ENCODE measurements at regions of chr2 and their contacts with region 1.

Region 1: GRCh38 chr2:26846328-26847306 is 1.3 kb upstream of the DPYSL5 start:
- DNase-seq: peak; percentile 55 to 72
- ATAC-seq: peak; percentile 67 to 90 (median 80)
- H3K4me3 ChIP-seq: peak overlapping the region in 1 of 10 donors; percentile 18
- H3K27ac ChIP-seq: no peak overlapping the region
- H3K4me1 ChIP-seq: peaks cover 12 to 43% (median 38%) of the 10 kb centered on the region in 9 donors
- H3K27me3 ChIP-seq: peaks cover 42 to 99% (median 92%) of the 10 kb centered on the region in 7 donors
- CTCF ChIP-seq: peak; percentile 67 to 88 (median 80)

Region 2: DNA sequence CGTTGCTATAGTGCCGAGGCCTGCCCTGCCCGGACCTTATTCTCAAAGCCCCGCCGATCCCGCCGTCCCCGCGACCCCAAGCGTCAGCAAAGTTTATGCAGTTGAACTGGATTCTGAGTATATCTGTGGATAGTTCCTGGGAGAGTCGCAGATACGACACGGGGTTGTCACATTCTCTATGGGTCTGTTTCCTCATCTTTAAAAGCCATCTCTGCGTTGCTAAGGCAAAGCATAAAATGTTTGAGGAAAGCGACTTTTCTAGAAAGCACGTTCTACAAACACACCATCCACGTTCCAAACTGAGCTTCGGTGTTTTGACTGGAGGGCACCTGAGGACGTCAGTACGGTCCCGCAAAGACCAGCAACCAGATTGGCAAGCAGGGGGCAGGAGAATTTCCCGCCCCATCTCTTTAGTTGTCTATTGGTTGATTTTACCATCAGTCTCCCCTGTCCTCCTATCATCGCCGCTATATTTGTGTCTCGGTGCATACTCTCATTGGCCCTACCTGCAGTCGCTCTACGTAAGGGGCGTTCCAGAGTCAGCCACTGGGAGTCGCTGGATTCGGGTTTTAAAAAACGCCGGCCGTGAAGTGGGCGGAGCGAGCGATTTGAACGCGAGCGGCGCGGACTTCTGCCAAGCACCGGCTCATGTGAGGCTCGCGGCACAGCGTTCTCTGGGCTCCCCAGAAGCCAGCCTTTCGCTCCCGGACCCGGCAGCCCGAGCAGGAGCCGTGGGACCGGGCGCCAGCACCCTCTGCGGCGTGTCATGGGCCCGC is 61.0 kb before region 1 on chr2 and contains the start of gene CENPA:
- intact Hi-C with region 1: no loop called
- DNase-seq: peak; percentile 94 to 99
- ATAC-seq: peak; percentile 98 to 100 (median 100)
- H3K4me3 ChIP-seq: peak within 1 kb of the TSS; percentile 54 to 94 (median 70)
- H3K27ac ChIP-seq: peak within 1 kb of the TSS in 5 of 10 donors; percentile 33 to 77 (median 42)
- H3K4me1 ChIP-seq: peaks cover 0 to 18% (median 12%) of the 10 kb centered on the region in 9 donors
- H3K27me3 ChIP-seq: peaks cover 0 to 6% (median 0%) of the 10 kb centered on the region in 7 donors
- CTCF ChIP-seq: peak in 8 of 9 donors; percentile 32 to 63 (median 54)
- total RNA-seq, gene CENPA: 0.30 to 33.1 (median 6.1) TPM in 8 of 10 donors, not detected in the others

Region 3: DNA sequence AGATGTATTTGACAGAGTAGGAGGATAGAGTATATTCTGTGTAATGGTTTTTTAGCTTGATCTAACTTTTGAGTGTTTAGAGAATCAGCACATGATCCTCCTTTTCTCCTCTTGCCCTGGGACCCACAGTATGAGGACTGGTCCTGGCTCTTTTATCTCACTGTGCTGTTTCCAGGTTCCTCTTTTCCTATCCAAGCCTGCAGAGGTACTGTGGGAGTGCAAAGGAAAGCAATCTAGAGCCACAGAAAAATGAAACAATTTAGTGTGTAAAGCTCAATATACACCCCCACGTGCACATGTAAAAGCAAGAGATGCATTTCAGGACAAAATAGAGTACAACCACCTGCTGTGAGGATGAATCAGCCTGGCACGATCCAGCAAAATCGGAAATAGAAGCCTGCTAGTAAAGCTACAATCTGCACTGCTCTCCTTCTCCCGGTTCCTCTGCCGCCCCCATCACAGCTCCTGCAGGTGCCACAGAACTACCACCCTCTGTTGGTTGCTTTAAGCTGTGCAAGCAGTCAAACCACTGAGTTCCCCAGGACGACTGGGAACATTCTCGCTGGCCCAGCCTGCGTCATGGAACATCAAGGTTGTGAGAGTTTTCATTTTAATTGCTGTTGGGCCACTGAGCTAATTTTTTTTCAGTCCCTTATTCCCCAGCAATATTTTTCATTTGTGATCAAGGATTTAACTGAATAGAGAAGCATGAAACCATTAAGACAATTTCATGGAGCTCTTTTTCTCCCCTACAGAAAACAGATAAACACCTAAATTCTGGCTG is 76.0 kb after region 1 on chr2:
- intact Hi-C with region 1: loop called (anchors 2 to 5 kb)
- DNase-seq: peak; percentile 25 to 42
- ATAC-seq: peak in 7 of 8 donors; percentile 73 to 93 (median 87)
- H3K4me3 ChIP-seq: no peak overlapping the region
- H3K27ac ChIP-seq: no peak overlapping the region
- H3K4me1 ChIP-seq: peaks cover 0 to 5% (median 0%) of the 10 kb centered on the region in 9 donors
- H3K27me3 ChIP-seq: peaks cover 0 to 29% (median 2%) of the 10 kb centered on the region in 7 donors
- CTCF ChIP-seq: peak; percentile 28 to 71 (median 63)

Region 4: GRCh38 chr2:26942543-26943295 is 96.1 kb after region 1 on chr2:
- intact Hi-C with region 1: loop called (anchors 1 to 5 kb)
- DNase-seq: peak; percentile 39 to 64
- ATAC-seq: peak in 4 of 8 donors; percentile 31 to 43 (median 40)
- H3K4me3 ChIP-seq: no peak overlapping the region
- H3K27ac ChIP-seq: no peak overlapping the region
- H3K4me1 ChIP-seq: peaks cover 0 to 12% (median 9%) of the 10 kb centered on the region in 9 donors
- H3K27me3 ChIP-seq: peaks cover 0 to 40% (median 30%) of the 10 kb centered on the region in 7 donors
- CTCF ChIP-seq: peak; percentile 70 to 88 (median 83)

Region 5: GRCh38 chr2:27016801-27017325 is 170.2 kb after region 1 on chr2:
- intact Hi-C with region 1: loop called in 6 of 10 experiments (anchors 5 to 10 kb)
- DNase-seq: peak in 1 of 2 donors; percentile 48
- ATAC-seq: peak in 6 of 8 donors; percentile 30 to 67 (median 43)
- H3K4me3 ChIP-seq: no peak overlapping the region
- H3K27ac ChIP-seq: no peak overlapping the region
- H3K4me1 ChIP-seq: peaks cover 0 to 67% (median 39%) of the 10 kb centered on the region in 9 donors
- H3K27me3 ChIP-seq: no peaks in the 10 kb centered on the region
- CTCF ChIP-seq: peak; percentile 40 to 78 (median 68)

Region 6: DNA sequence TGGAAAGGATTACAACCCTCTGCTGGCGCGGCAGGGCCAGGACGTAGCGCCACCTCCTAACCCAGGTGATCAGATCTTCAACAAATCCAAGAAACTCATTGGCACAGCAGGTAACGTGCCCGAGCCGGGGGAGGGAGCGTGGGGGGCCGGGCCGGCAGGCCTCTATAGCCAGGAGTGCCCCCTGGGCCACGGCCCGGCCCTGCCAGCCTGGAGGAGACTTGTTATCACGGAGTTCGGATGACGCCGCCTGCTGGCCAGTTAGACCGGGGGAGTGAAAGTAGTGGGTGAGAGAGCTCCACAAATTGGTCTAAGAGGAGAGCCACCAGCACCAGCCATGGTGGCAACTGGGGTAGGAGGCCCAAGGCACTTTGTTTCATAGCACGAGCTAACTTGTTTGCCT is 177.6 kb after region 1 on chr2:
- intact Hi-C with region 1: loop called in 6 of 10 experiments (anchors 5 to 10 kb)
- DNase-seq: no peak
- ATAC-seq: no peak
- H3K4me3 ChIP-seq: no peak overlapping the region
- H3K27ac ChIP-seq: no peak overlapping the region
- H3K4me1 ChIP-seq: peaks cover 0 to 26% (median 14%) of the 10 kb centered on the region in 9 donors
- H3K27me3 ChIP-seq: no peaks in the 10 kb centered on the region
- CTCF ChIP-seq: no peak

Region 7: DNA sequence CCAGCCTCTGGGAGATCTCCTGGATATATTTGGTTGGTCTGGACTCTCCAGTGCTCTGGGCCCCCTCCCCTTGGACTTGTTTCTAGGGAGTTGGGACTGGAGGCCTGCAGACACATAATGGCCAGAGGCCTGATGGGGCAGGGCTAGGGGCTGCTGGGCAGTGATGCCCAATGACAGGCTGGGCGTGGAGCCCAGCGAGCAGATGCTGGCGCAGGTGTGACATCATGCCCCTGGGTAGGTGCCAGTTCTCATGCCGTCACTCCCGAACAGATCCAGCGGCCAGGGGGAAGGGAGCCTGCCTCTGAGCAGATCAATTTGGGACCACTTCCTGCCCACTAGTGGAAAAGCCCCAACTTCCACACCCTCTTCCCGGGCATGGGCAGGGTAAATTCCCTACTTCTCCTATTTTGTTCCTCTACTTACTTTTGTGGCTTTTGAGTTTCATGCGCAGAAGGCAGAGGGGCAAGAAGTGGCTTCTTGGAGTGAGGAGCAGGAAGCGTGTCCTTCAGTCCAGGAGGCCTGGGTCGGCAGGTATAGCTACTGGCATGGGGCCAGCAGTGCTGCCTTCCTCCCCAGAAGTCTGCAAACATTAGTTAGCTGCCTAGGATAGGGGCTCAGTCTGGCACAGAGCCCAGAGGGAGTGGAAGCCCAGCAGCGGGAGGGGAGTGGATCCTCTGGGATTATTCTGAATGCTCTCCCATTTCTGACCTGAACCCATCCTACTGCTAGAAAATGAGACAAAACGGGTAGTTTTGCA is 470.2 kb after region 1 on chr2:
- intact Hi-C with region 1: loop called in 1 of 10 experiments (anchors 10 kb)
- DNase-seq: peak; percentile 48 to 55
- ATAC-seq: peak in 7 of 8 donors; percentile 25 to 59 (median 43)
- H3K4me3 ChIP-seq: no peak overlapping the region
- H3K27ac ChIP-seq: peak overlapping the region in 3 of 10 donors; percentile 31 to 48 (median 43)
- H3K4me1 ChIP-seq: peaks cover 5 to 28% (median 15%) of the 10 kb centered on the region in 9 donors
- H3K27me3 ChIP-seq: no peaks in the 10 kb centered on the region
- CTCF ChIP-seq: no peak